Activated CD4-positive, alpha-beta T cell treated with anti-CD3 and anti-CD28 coated beads, Interleukin-2, amount 10 ng/mL, durations not matched to agents 24 days and 14 days (primary cell): ENCODE measurements at regions of chr10 and their contacts with region 1.

Region 1: DNA sequence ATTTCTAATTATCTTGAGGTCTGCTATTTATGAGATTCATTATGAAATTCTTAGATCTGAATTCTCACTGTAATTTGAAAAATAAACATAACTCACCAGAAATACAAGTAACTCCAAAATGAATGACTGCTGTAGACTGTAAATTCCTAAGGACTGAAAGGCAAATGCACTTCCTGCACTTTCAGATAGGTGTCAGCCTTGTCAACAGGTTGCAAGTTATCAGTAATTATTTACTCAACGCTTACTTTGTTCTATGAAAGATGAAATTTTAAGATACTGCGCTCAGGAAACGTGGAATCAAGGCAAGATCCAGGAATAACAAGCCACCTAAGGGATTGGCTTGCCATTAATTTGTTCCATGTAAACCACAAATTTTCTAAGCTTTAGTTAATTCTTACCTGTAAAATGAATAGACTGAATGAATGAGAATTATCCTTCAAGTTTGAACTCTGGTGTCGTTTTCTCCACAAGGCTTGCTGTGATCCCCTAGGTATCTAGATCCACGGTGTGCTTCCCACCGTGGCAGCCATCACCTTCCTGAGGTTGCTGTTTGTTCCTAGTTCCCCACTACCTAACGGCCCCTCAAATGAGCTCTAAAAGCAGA is 12.6 kb downstream of the DHX32 start:
- DNase-seq: peak; percentile 65
- H3K4me3 Mint-ChIP-seq: no peak overlapping the region
- H3K27ac Mint-ChIP-seq: no peak overlapping the region
- H3K4me1 Mint-ChIP-seq: no peaks in the 10 kb centered on the region
- H3K27me3 Mint-ChIP-seq: no peaks in the 10 kb centered on the region

Region 2: GRCh38 chr10:125976960-125977603 is 108.6 kb after region 1 on chr10:
- intact Hi-C with region 1: loop called (anchors 10 kb)
- DNase-seq: no peak
- H3K4me3 Mint-ChIP-seq: no peak overlapping the region
- H3K27ac Mint-ChIP-seq: no peak overlapping the region
- H3K4me1 Mint-ChIP-seq: no peaks in the 10 kb centered on the region
- H3K27me3 Mint-ChIP-seq: no peaks in the 10 kb centered on the region

Region 3: GRCh38 chr10:126749015-126749655 is 880.7 kb after region 1 on chr10:
- intact Hi-C with region 1: loop called (anchors 10 kb)
- DNase-seq: peak; percentile 85
- H3K4me3 Mint-ChIP-seq: no peak overlapping the region
- H3K27ac Mint-ChIP-seq: no peak overlapping the region
- H3K4me1 Mint-ChIP-seq: no peaks in the 10 kb centered on the region
- H3K27me3 Mint-ChIP-seq: no peaks in the 10 kb centered on the region